PC-9 (cell line): ENCODE measurements at regions of chr9 and their contacts with region 1.

Region 1: DNA sequence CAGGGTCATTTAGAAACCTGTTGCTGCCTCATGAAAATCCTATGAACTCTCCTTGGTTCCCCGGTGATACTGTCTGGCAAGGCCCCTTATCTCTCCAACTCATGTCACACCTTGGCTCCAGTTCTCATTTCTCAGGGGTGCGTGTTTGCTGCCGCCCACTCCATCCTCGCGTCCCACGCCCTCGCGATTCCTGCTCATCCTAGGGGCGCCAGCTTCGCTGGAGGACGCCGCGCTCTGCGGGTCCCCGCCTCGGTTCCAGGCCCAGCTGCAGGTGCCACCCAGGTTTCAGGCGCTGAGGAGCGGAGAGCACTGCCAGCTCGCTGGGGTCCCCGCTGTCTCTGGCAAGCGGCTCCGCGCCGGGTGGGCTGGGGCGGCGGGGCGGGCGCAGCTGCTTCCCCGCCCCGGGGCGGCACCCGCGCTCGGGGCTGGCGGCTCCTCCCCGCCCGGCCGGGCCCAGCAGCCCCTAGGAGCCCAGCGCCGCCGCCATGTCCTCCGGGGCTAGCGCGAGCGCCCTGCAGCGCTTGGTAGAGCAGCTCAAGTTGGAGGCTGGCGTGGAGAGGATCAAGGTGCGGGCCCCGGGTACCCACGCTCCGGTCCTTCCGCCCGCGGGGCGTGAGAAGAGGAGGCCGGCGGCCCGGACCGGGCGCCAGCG is at the start of gene GNG10:
- DNase-seq: peak in 1 of 2 experiments; percentile 69
- H3K4me3 ChIP-seq: peak within 1 kb of the TSS; percentile 73
- H3K27ac ChIP-seq: peak within 1 kb of the TSS; percentile 48
- H3K4me1 ChIP-seq: peaks cover 16% of the 10 kb centered on the region
- H3K27me3 ChIP-seq: no peaks in the 10 kb centered on the region
- CTCF ChIP-seq: no peak
- total RNA-seq, gene GNG10: 70.8 and 76.9 TPM in 2 replicates

Region 2: GRCh38 chr9:111483862-111484571 is 177.3 kb before region 1 on chr9 and contains the start of gene ECPAS:
- CTCF ChIA-PET with region 1: no interaction called
- POLR2A ChIA-PET with region 1: no interaction called
- intact Hi-C with region 1: loop called (anchors 5 kb)
- DNase-seq: peak; percentile 71 to 83
- H3K4me3 ChIP-seq: peak within 1 kb of the TSS; percentile 93
- H3K27ac ChIP-seq: peak within 1 kb of the TSS; percentile 94
- H3K4me1 ChIP-seq: peaks cover 19% of the 10 kb centered on the region
- H3K27me3 ChIP-seq: no peaks in the 10 kb centered on the region
- CTCF ChIP-seq: no peak
- total RNA-seq, gene ECPAS: 79.3 and 123 TPM in 2 replicates

Region 3: GRCh38 chr9:111621895-111622480 is 39.3 kb before region 1 on chr9:
- CTCF ChIA-PET with region 1: no interaction called
- POLR2A ChIA-PET with region 1: no interaction called
- intact Hi-C with region 1: loop called (anchors 2 kb)
- DNase-seq: peak in 1 of 2 experiments; percentile 26
- H3K4me3 ChIP-seq: no peak overlapping the region
- H3K27ac ChIP-seq: peak overlapping the region; percentile 73
- H3K4me1 ChIP-seq: peaks cover 32% of the 10 kb centered on the region
- H3K27me3 ChIP-seq: no peaks in the 10 kb centered on the region
- CTCF ChIP-seq: peak; percentile 68

Region 4: GRCh38 chr9:111631071-111631971 is 30.0 kb before region 1 on chr9 and contains the start of gene DNAJC25:
- CTCF ChIA-PET with region 1: no interaction called
- POLR2A ChIA-PET with region 1: interaction called, 12 read pairs
- intact Hi-C with region 1: loop called (anchors 1 kb)
- DNase-seq: peak; percentile 97 to 99
- H3K4me3 ChIP-seq: peak within 1 kb of the TSS; percentile 73
- H3K27ac ChIP-seq: peak within 1 kb of the TSS; percentile 63
- H3K4me1 ChIP-seq: peaks cover 23% of the 10 kb centered on the region
- H3K27me3 ChIP-seq: no peaks in the 10 kb centered on the region
- CTCF ChIP-seq: no peak
- total RNA-seq, gene DNAJC25: 7.3 and 7.9 TPM in 2 replicates